Dendritic cell treated with granulocyte-macrophage colony-stimulating factor and Interleukin-4, amounts not matched to agents 40 ng/mL and 50 ng/mL, for 4 days (primary cell): ENCODE measurements at regions of chr7 and their contacts with region 1.

Region 1: DNA sequence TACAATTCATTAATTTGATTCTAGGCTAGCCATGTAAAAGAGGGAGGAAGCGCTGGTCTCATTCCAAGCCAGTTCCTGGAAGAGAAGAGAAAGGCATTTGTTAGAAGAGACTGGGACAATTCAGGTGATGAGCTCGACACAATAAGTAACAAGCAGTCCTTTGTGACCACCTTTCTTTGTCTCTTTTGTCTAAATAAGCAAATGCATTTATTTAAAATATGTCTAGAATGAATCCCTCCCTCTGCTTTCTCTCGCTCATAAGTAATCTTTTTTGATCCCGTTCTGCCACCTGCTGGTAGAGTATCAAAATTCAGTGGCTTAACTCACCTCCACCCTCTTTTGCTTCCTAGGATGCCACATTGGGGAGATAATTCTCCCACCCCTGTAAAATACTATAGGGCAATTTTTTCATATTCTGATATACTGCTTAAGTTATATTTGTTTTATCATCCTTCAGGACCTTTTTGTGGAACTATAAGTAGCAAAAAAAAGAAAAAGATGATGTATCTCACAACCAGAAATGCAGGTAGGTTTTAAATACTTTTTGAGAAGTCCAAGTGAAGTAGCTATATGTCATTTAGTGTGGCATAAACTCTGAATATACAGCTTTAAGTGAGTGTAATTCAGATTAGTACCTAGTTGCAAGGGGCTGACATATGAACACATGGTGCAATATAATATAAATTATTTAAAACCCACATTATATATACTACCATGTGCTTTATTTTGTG is 91.5 kb downstream of the GSDME start:
- H3K4me3 Mint-ChIP-seq: no peak overlapping the region
- H3K27ac Mint-ChIP-seq: no peak overlapping the region
- H3K4me1 Mint-ChIP-seq: no peaks in the 10 kb centered on the region
- H3K27me3 Mint-ChIP-seq: no peaks in the 10 kb centered on the region

Region 2: GRCh38 chr7:23570592-23571200 is 1095.0 kb before region 1 on chr7:
- intact Hi-C with region 1: loop called (anchors 2 kb)
- H3K4me3 Mint-ChIP-seq: no peak overlapping the region
- H3K27ac Mint-ChIP-seq: no peak overlapping the region
- H3K4me1 Mint-ChIP-seq: no peaks in the 10 kb centered on the region
- H3K27me3 Mint-ChIP-seq: peaks cover 3% of the 10 kb centered on the region

Region 3: GRCh38 chr7:23696916-23697441 is 968.8 kb before region 1 on chr7:
- intact Hi-C with region 1: loop called (anchors 5 kb)
- H3K4me3 Mint-ChIP-seq: no peak overlapping the region
- H3K27ac Mint-ChIP-seq: no peak overlapping the region
- H3K4me1 Mint-ChIP-seq: peaks cover 8% of the 10 kb centered on the region
- H3K27me3 Mint-ChIP-seq: no peaks in the 10 kb centered on the region

Region 4: GRCh38 chr7:23811540-23811939 is 854.2 kb before region 1 on chr7:
- intact Hi-C with region 1: no loop called
- H3K4me3 Mint-ChIP-seq: no peak overlapping the region
- H3K27ac Mint-ChIP-seq: no peak overlapping the region
- H3K4me1 Mint-ChIP-seq: no peaks in the 10 kb centered on the region
- H3K27me3 Mint-ChIP-seq: no peaks in the 10 kb centered on the region

Region 5: DNA sequence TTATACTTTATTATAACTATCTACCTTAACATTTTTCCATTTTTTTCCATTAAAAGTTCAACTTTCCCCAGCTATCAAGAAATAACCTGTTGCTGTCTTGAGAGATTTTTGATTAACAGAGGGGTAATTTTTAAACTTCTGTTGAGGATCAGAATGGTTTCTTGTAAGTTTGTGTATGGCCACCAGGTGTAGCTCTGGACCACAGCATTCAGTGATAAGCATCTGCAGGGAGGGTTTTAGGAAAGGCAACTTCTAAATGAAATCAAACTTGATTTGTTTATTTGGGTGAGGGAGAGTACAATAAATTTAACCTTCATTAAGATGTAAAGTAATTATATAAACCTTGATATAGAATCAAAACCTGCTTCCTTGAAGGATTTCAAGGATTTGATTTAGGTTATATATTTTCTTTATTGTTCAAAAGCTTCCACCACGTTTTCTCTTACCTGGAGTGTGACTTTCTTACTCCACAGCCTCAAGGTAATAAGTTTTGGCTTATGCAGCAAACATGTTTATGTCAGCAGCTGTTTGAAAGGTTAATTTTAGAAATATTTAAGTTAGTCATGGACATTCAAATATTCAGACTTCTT is 802.4 kb before region 1 on chr7:
- intact Hi-C with region 1: loop called (anchors 2 kb)
- H3K4me3 Mint-ChIP-seq: no peak overlapping the region
- H3K27ac Mint-ChIP-seq: no peak overlapping the region
- H3K4me1 Mint-ChIP-seq: no peaks in the 10 kb centered on the region
- H3K27me3 Mint-ChIP-seq: peaks cover 3% of the 10 kb centered on the region

Region 6: GRCh38 chr7:24290004-24290641 is 375.6 kb before region 1 on chr7:
- intact Hi-C with region 1: loop called (anchors 1 kb)
- H3K4me3 Mint-ChIP-seq: no peak overlapping the region
- H3K27ac Mint-ChIP-seq: no peak overlapping the region
- H3K4me1 Mint-ChIP-seq: peaks cover 5% of the 10 kb centered on the region
- H3K27me3 Mint-ChIP-seq: peaks cover 24% of the 10 kb centered on the region

Region 7: DNA sequence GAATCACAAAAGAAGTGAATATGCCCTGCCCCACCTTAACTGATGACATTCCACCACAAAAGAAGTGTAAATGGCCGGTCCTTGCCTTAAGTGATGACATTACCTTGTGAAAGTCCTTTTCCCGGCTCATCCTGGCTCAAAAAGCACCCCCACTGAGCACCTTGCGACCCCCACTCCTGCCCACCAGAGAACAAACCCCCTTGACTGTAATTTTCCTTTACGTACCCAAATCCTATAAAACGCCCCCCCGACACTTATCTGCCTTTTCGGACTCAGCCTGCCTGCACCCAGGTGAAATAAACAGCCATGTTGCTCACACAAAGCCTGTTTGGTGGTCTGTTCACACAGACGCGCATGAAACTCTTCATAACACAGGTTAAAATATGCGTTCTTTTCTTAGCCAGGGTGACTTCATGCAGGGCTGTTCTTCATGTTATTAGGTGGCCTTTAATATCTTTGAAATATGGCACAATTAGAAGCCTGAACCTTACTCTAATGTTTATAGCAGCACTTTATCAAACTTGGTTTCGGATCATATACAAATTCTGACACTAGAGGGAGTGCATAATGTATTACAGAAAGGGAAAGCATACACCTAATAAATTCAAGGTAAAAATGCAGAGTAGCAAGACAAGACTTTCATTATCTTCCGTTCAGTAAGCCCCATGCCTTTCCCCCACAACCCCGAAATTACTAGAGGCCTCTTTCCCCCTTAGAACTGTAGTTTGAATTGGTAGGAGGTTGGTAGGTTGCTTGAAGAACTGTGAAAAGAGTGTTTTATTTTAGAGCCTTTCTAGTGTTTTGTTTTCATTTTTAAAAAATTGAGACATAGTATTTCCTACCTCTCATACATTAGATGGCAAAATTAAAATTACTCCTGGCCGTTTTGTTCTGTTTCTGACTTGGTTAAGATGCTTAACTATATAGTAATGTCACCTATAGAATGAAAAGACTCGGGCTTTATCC is 263.8 kb before region 1 on chr7:
- intact Hi-C with region 1: loop called (anchors 2 kb)
- H3K4me3 Mint-ChIP-seq: no peak overlapping the region
- H3K27ac Mint-ChIP-seq: no peak overlapping the region
- H3K4me1 Mint-ChIP-seq: no peaks in the 10 kb centered on the region
- H3K27me3 Mint-ChIP-seq: no peaks in the 10 kb centered on the region

Region 8: GRCh38 chr7:24576171-24577025 is 89.3 kb before region 1 on chr7:
- intact Hi-C with region 1: loop called (anchors 1 kb)
- H3K4me3 Mint-ChIP-seq: no peak overlapping the region
- H3K27ac Mint-ChIP-seq: no peak overlapping the region
- H3K4me1 Mint-ChIP-seq: peaks cover 21% of the 10 kb centered on the region
- H3K27me3 Mint-ChIP-seq: peaks cover 27% of the 10 kb centered on the region